ENCODE measurements at regions of chr18 and their contacts with region 1.

Region 1: DNA sequence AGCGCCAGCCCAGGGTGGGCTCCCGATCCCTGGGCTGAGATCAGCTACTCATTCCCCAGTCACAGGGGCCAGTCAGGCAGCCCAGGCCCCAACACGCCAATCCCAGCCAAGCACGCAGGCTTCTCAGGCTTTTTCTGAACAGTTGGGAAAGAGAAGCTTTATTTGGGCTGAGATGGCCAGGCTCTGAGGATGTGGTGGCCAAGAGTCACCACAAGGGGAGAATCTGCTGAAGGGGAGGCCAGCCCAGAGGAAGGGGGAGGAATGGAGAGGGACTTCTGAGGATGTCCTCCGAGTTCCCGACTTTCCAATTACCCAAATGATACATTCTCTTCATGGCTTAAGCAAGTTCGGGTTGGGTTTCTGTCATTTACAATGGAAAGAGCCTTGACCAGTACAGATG is 2.8 kb upstream of the DIPK1C start:
- DNase-seq: peak; percentile 53
- ATAC-seq: peak; percentile 83
- H3K4me3 Mint-ChIP-seq: no peak overlapping the region
- H3K27ac Mint-ChIP-seq: no peak overlapping the region
- H3K4me1 Mint-ChIP-seq: peaks cover 3% of the 10 kb centered on the region
- H3K27me3 Mint-ChIP-seq: peaks cover 45% of the 10 kb centered on the region
- CTCF ChIP-seq: 0 out of 2 replicates have a peak, but pooled peaks have one; percentile 28

Region 2: DNA sequence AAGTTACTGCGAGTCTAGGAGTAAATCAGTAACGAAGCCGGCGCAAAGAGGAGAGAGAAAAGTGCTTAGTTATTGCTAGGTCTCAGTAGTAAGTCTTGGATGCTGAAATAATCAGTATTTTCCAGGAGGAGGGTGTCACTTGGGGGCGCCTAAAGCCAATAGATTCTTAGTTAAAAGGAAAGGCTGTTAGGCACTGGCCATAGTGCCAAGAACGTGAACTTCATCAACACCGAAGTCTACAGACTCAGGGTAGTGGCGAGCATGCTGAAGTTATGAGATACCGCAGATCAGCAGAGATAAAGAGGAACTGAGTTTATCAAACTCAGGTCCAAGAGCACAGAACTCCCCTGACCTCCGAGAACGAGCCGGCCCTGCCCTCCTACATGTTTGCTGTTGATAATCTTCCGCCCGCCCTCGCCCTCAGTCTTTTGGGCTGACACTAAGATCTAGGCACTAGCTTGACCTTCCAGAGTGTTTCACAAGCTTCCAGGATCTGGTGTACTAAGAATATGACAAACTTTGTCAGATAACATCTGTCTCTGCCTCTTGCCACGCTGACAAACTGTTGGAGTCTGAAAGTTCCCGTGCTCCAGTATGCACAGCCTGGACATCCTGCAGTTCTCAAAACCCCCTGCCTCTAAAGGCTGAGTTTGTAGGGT is 217.3 kb before region 1 on chr18:
- CTCF ChIA-PET with region 1: no interaction called
- POLR2A ChIA-PET with region 1: no interaction called
- DNase-seq: no peak
- ATAC-seq: peak; percentile 82
- H3K4me3 Mint-ChIP-seq: no peak overlapping the region
- H3K27ac Mint-ChIP-seq: no peak overlapping the region
- H3K4me1 Mint-ChIP-seq: peaks cover 35% of the 10 kb centered on the region
- H3K27me3 Mint-ChIP-seq: no peaks in the 10 kb centered on the region; the same call in 1 of the 2 replicates
- CTCF ChIP-seq: no peak

Region 3: GRCh38 chr18:74353169-74353775 is 106.6 kb before region 1 on chr18:
- CTCF ChIA-PET with region 1: interaction called, 13 read pairs
- POLR2A ChIA-PET with region 1: no interaction called
- DNase-seq: peak; percentile 53
- ATAC-seq: peak; percentile 93
- H3K4me3 Mint-ChIP-seq: no peak overlapping the region
- H3K27ac Mint-ChIP-seq: no peak overlapping the region
- H3K4me1 Mint-ChIP-seq: peaks cover 3% of the 10 kb centered on the region
- H3K27me3 Mint-ChIP-seq: no peaks in the 10 kb centered on the region
- CTCF ChIP-seq: no peak

Measured in WTC11 (cell line).